ENCODE measurements at regions of chr1 and their contacts with region 1.

Region 1: GRCh38 chr1:226201029-226201593 is 14.6 kb upstream of the ACBD3 start:
- DNase-seq: no peak
- H3K4me3 ChIP-seq: no peak overlapping the region
- H3K27ac ChIP-seq: no peak overlapping the region
- H3K4me1 ChIP-seq: no peaks in the 10 kb centered on the region
- H3K27me3 ChIP-seq: no peaks in the 10 kb centered on the region
- CTCF ChIP-seq: no peak
- EP300 ChIP-seq: no peak
- POLR2A ChIP-seq: no peak

Region 2: DNA sequence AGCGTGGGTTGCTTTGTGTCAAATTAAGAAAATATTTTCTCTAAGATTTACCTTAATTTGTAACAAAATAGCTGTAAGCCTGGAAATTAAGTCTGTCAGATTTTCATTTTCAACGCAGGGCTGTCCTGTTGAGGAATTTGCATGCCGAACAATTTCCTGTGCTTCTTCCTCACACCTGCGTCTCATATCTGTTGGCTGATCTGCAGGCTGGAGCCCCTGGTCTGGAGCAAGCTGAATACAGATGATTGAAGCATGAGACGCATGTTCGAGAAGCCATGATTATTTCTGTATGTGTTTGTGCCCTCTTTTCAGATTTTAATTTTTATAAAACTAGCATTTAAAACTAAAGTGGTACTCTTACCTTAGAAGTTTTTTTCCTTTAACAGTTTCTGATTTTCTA is 32.2 kb after region 1 on chr1:
- intact Hi-C with region 1: no loop called
- DNase-seq: no peak
- H3K4me3 ChIP-seq: no peak overlapping the region
- H3K27ac ChIP-seq: no peak overlapping the region
- H3K4me1 ChIP-seq: no peaks in the 10 kb centered on the region
- H3K27me3 ChIP-seq: no peaks in the 10 kb centered on the region
- CTCF ChIP-seq: no peak
- EP300 ChIP-seq: no peak
- POLR2A ChIP-seq: no peak

Region 3: DNA sequence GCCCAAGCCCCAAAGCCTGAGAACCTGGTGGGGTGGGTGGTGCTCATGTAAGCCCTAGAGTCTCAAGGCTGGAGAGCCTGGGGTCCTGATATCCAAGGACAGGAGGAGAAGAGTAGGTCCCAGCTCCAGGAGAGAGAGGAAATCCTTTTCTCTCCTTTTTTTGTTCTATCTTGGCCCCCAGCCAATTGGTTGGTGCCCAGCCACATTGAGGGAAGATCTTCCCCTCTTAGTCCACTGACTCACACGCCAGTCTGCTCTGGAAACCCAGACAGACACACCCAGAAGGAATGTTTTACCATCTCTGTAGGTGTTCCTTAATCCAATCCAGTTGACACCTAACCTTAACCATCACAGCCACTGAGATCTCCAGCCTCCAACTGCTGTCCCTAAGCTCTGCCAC is 124.1 kb after region 1 on chr1:
- intact Hi-C with region 1: loop called in 1 of 4 experiments (anchors 10 kb)
- DNase-seq: no peak
- H3K4me3 ChIP-seq: no peak overlapping the region
- H3K27ac ChIP-seq: no peak overlapping the region
- H3K4me1 ChIP-seq: no peaks in the 10 kb centered on the region
- H3K27me3 ChIP-seq: no peaks in the 10 kb centered on the region
- CTCF ChIP-seq: no peak
- EP300 ChIP-seq: no peak
- POLR2A ChIP-seq: no peak

Measured in ovary (tissue), 10 donors.